ENCODE measurements at regions of chr18 and their contacts with region 1.

Region 1: GRCh38 chr18:12947355-12948041 is at the start of gene SEH1L:
- DNase-seq: peak; percentile 100
- H3K4me3 ChIP-seq: peak within 1 kb of the TSS; percentile 67 to 84 (median 70)
- H3K27ac ChIP-seq: peak within 1 kb of the TSS; percentile 89 to 98 (median 96)
- H3K4me1 ChIP-seq: peaks cover 15 to 50% (median 33%) of the 10 kb centered on the region in 4 donors
- H3K27me3 ChIP-seq: no peaks in the 10 kb centered on the region
- CTCF ChIP-seq: no peak
- EP300 ChIP-seq: peak; percentile 13
- POLR2A ChIP-seq: peak; percentile 71
- total RNA-seq, gene SEH1L: 18.0 to 42.6 (median 23.2) TPM

Region 2: GRCh38 chr18:12308386-12309100 is 639.0 kb before region 1 on chr18:
- intact Hi-C with region 1: loop called (anchors 10 kb)
- DNase-seq: peak; percentile 97
- H3K4me3 ChIP-seq: peak overlapping the region; percentile 78 to 99 (median 86)
- H3K27ac ChIP-seq: peak overlapping the region; percentile 98 to 100 (median 100)
- H3K4me1 ChIP-seq: peaks cover 25 to 68% (median 63%) of the 10 kb centered on the region in 4 donors
- H3K27me3 ChIP-seq: no peaks in the 10 kb centered on the region
- CTCF ChIP-seq: no peak
- EP300 ChIP-seq: no peak
- POLR2A ChIP-seq: peak; percentile 65

Region 3: GRCh38 chr18:12777500-12777944 is 170.0 kb before region 1 on chr18:
- intact Hi-C with region 1: no loop called
- DNase-seq: no peak
- H3K4me3 ChIP-seq: peak overlapping the region in 3 of 4 donors; percentile 16 to 37 (median 24)
- H3K27ac ChIP-seq: peak overlapping the region in 1 of 4 donors; percentile 3
- H3K4me1 ChIP-seq: no peaks in the 10 kb centered on the region
- H3K27me3 ChIP-seq: no peaks in the 10 kb centered on the region
- CTCF ChIP-seq: no peak
- EP300 ChIP-seq: no peak
- POLR2A ChIP-seq: no peak

Region 4: GRCh38 chr18:12883684-12884405 is 63.7 kb before region 1 on chr18 and contains the start of gene PTPN2:
- intact Hi-C with region 1: loop called (anchors 5 kb)
- DNase-seq: peak; percentile 95
- H3K4me3 ChIP-seq: peak within 1 kb of the TSS; percentile 72 to 93 (median 76)
- H3K27ac ChIP-seq: peak within 1 kb of the TSS; percentile 97 to 99 (median 98)
- H3K4me1 ChIP-seq: peaks cover 7 to 33% (median 28%) of the 10 kb centered on the region in 4 donors
- H3K27me3 ChIP-seq: no peaks in the 10 kb centered on the region
- CTCF ChIP-seq: no peak
- EP300 ChIP-seq: no peak
- POLR2A ChIP-seq: peak; percentile 87
- total RNA-seq, gene PTPN2: 14.3 to 27.5 (median 18.0) TPM

Region 5: GRCh38 chr18:12990967-12991838 is 43.7 kb after region 1 on chr18 and contains the start of gene CEP192:
- intact Hi-C with region 1: loop called (anchors 2 kb)
- DNase-seq: peak; percentile 99
- H3K4me3 ChIP-seq: peak within 1 kb of the TSS; percentile 70 to 92 (median 78)
- H3K27ac ChIP-seq: peak within 1 kb of the TSS; percentile 79 to 91 (median 86)
- H3K4me1 ChIP-seq: peaks cover 16 to 32% (median 25%) of the 10 kb centered on the region in 4 donors
- H3K27me3 ChIP-seq: no peaks in the 10 kb centered on the region
- CTCF ChIP-seq: peak in 1 of 3 experiments; percentile 5
- EP300 ChIP-seq: no peak
- POLR2A ChIP-seq: peak; percentile 59
- total RNA-seq, gene CEP192: 18.7 to 21.6 (median 19.6) TPM

Measured in esophagus muscularis mucosa (tissue), 4 donors.